ENCODE measurements at regions of chr1 and their contacts with region 1.

Region 1: DNA sequence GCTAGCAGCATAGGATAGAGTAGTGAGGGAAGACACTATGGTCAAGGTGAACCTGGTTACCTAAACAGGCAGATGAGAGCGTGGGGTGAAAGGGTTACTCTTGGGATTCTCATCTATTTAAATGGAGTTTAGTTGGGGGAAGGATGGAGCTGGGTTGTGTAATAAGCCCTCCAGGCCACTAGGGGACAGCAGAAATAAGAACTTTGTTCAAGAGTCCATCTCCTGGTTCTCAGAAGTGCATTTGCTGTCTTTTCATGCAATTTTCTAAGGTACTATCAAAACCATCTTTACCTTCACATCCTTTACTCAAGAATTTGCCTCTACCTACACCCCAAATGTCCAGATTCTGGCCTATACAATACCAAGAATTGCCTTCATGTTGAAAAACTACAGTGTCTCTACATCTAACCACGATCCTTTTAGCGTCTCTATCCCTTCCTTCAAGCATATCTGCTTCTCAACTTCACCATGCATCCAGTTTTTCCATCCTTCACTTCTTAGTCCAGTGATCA is 28.0 kb downstream of the SLAMF1 start:
- DNase-seq: no peak
- CTCF ChIP-seq: peak; percentile 64

Region 2: DNA sequence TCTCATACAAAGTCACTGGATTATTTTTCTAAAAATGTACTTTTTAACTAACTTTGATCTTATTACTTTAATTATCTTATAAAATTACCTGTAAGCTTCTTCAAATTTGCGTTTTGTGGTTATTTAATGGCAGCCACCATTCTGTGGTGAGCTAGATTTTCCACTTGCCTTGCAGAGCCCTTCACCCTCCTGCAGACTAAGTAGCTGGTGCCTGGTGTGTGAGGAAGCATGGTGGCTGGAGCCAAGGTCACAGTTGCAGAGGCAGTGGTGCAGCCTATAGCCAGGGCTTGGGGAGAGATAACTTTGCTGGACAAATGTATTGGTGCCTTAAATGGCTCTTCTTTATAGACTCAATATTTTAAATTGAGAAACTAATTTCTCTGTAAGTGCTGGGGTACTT is 28.3 kb before region 1 on chr1:
- CTCF ChIA-PET with region 1: no interaction called
- POLR2A ChIA-PET with region 1: no interaction called
- DNase-seq: no peak
- CTCF ChIP-seq: no peak

Region 3: GRCh38 chr1:160629286-160630210 is 10.7 kb after region 1 on chr1:
- CTCF ChIA-PET with region 1: interaction called, 22 read pairs
- POLR2A ChIA-PET with region 1: no interaction called
- DNase-seq: no peak
- CTCF ChIP-seq: no peak

Region 4: DNA sequence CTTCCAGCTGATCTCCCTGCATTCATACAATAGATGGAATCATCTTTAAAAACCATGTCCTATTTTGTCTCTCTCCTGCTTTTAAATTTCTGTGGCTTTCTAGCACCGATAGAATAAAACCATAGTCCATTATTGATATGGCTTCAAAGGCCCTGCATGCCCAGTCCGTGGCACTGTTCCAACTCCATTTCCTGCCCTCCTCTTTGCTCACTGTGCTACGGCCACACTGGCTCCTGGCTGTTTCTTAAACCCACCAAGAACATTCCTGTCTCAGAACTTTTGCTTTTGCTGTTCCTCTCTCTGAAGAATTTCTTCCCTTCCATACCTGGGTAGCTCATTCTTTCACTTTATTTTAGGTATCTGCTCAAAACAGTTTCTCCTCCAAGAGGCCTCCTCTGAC is 20.8 kb after region 1 on chr1:
- CTCF ChIA-PET with region 1: interaction called, 10 read pairs
- POLR2A ChIA-PET with region 1: interaction called, 8 read pairs
- DNase-seq: no peak
- CTCF ChIP-seq: no peak

Measured in GM10248 (cell line).